Activated T-helper 1 cell treated with anti-CD3 and anti-CD28 coated beads, Interleukin-12 subunit alpha, Interleukin-12 subunit beta, Interleukin-2, Interleukin-4 antibody, amounts not matched to agents 30 ng/mL and 10 ng/mL and 1 ng/mL, durations not matched to agents 14 hours and 24 hours and 36 hours (primary cell): ENCODE measurements at regions of chr3 and their contacts with region 1.

Region 1: DNA sequence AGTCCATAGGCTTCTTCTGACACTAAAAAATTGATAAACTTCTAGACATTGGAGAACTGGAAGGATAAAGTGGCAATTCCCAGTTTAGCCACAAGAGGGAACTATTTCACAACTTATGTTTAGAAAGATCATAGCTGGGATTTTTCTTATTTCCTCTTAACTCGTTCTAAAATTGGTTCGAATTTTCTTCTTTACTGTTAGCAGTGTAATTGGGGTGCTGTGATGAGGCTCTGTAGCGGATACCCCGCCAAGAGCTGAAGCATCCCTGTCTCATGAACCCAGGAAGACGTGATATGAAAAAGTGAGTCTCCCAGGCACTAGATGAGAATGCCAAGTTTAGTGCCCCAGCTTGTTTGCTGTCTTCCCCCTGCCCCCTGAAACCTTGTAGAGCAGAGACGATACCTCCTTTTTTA is 85.1 kb downstream of the PDCD6IP start:
- DNase-seq: no peak
- H3K4me3 Mint-ChIP-seq: no peak overlapping the region
- H3K27ac Mint-ChIP-seq: no peak overlapping the region
- H3K4me1 Mint-ChIP-seq: peaks cover 6% of the 10 kb centered on the region
- H3K27me3 Mint-ChIP-seq: peaks cover 12% of the 10 kb centered on the region

Region 2: DNA sequence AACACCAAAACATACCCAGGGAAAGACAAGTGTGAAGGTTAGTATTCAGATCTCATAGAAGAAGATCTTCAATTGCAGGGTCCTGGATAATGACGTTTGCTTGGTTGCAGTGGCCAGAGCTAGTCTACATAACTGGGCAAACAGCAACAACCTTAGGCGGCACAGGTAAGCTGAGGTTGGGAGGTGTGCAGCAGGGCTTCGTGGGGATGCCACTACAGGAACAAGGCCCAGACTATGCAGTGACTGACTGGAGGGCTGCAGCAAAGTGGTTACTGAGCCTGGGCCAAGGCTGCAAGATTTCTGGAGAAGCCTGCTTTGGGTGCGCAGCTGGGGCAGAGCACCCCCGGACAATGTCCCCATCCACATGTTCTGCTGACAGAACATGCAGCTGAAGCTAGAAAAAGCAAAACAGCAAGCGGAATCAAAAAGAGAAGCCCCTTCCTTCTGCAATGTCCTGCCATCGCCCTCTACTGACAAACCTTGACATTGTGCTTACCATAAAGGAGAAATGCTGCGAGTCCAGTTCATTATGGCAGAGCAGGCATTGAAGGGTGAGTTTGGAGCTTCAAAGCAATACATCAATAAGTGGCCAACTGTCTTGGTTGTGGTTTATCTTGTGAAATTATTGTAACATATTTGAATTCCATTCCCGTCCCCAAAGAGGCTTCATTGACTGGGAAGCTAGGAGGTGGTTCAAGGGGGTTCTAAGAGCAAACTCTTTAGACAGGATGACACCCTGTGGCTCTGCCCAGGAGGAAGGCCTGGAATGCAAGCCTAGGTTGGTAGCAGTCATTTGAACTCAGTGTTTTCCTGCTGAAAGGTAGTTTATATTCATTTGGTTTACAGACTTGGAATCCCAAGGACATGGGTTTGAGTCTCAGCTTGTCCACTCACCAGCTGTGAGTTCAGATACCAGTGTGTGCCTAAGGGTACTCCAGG is 131.9 kb after region 1 on chr3:
- intact Hi-C with region 1: loop called (anchors 5 kb)
- DNase-seq: no peak
- H3K4me3 Mint-ChIP-seq: no peak overlapping the region
- H3K27ac Mint-ChIP-seq: no peak overlapping the region
- H3K4me1 Mint-ChIP-seq: peaks cover 12% of the 10 kb centered on the region
- H3K27me3 Mint-ChIP-seq: peaks cover 2% of the 10 kb centered on the region

Region 3: GRCh38 chr3:34183611-34184313 is 300.2 kb after region 1 on chr3:
- intact Hi-C with region 1: no loop called
- DNase-seq: no peak
- H3K4me3 Mint-ChIP-seq: no peak overlapping the region
- H3K27ac Mint-ChIP-seq: no peak overlapping the region
- H3K4me1 Mint-ChIP-seq: no peaks in the 10 kb centered on the region
- H3K27me3 Mint-ChIP-seq: peaks cover 2% of the 10 kb centered on the region

Region 4: GRCh38 chr3:34683851-34684250 is 800.3 kb after region 1 on chr3:
- intact Hi-C with region 1: loop called (anchors 1 kb)
- DNase-seq: no peak
- H3K4me3 Mint-ChIP-seq: no peak overlapping the region
- H3K27ac Mint-ChIP-seq: no peak overlapping the region
- H3K4me1 Mint-ChIP-seq: no peaks in the 10 kb centered on the region
- H3K27me3 Mint-ChIP-seq: no peaks in the 10 kb centered on the region